Esophagus muscularis mucosa (tissue), 4 donors: ENCODE measurements at regions of chr15 and their contacts with region 1.

Region 1: DNA sequence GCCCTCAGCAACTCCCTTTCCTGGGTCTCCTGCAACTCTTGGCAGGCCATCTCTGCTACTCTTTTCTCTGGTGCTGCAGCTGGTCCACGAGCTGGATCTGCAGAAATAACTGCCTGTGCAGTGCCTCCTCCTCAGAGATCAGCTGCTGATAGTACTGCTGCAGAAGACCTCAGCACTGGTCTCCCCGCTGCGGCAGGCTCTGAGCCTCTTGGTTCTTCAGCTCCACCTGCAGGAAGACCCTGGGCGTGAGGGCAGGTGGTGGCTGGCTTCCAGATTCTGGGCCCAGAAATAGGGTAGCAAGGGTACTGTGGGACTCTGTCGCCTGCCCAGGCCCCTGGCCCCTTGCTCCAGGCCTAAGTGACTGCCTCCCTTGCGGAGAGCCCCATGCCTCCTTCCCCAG is 79.7 kb upstream of the C2CD4B start:
- DNase-seq: no peak
- H3K4me3 ChIP-seq: no peak overlapping the region
- H3K27ac ChIP-seq: no peak overlapping the region
- H3K4me1 ChIP-seq: no peaks in the 10 kb centered on the region
- H3K27me3 ChIP-seq: no peaks in the 10 kb centered on the region
- CTCF ChIP-seq: no peak
- EP300 ChIP-seq: no peak
- POLR2A ChIP-seq: no peak

Region 2: DNA sequence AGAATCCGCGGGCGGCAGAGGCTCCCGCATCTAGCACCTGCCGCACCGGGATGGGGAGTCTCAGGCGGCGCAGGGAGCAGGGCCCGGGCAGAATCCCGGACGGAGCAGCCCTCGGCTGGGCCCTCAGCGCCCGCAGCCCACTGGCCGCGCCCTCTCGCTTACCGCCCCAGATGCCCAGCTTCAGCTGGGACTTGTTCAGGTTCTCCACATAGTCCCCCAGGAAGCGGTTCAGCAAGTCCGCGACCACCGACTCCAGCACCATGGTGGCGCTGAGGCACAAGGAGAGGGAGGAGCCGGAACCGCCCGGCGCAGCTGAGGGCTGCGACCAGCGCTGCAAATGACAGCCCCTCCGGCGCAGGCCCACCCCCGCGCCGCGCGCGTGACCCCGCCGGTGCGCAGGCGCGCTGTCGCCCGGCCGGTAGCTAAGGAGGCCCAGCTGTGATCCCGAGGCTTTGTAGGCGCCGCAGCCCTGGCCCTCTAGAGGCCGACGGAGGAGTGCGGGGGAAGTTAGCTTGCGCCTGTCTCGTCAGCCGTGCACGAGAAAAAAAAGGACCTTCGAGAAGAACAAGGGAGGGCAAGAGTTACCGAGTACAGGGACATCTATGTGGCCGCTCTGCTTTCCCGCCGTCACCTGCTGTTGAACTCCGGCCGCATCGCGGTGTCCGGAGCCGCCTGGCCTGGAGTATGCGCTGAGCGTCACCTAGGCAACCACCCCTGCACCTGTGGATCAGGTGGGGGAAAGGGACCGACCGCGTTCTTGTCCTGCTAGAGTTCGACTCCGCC is 184.5 kb before region 1 on chr15 and contains the start of gene VPS13C:
- intact Hi-C with region 1: no loop called
- DNase-seq: peak; percentile 96
- H3K4me3 ChIP-seq: peak within 1 kb of the TSS; percentile 88 to 96 (median 92)
- H3K27ac ChIP-seq: peak within 1 kb of the TSS; percentile 92 to 95 (median 94)
- H3K4me1 ChIP-seq: peaks cover 11 to 23% (median 22%) of the 10 kb centered on the region in 4 donors
- H3K27me3 ChIP-seq: peaks cover 0 to 8% (median 0%) of the 10 kb centered on the region in 4 donors
- CTCF ChIP-seq: peak; percentile 72 to 89 (median 81)
- EP300 ChIP-seq: no peak
- POLR2A ChIP-seq: peak; percentile 45
- total RNA-seq, gene VPS13C: 58.5 to 86.0 (median 59.4) TPM

Region 3: DNA sequence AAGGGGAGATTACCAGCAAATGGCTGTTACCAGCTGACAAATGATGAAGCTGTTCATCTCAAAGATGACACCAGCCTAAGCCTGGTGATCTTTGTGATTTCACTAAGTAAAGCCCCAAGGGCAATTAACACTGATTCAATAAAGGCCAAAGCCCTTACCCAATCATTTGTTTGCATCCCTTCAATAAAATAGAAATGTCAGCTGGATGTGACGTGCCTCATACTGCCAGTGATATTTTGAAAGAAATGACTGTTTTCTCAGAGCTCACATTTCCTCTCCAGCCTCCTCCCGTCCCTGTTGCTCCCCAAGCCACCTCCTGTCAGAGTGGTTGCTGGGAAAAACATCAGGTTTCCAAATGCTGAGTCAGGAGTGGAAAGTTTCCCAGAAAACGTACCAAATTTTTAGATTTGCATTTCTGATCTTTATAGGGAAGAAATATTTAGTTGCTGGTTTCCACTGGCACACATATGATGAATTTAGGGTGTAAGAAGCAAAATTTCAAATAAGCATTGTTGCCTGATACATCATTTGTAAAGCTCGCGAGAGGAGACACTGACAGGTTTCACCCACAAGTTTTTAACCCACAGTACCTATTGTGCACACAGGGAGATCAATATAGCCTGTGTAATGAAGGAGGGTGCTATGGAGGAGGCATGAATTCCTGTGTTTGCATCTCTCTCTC is 156.9 kb before region 1 on chr15:
- intact Hi-C with region 1: no loop called
- DNase-seq: no peak
- H3K4me3 ChIP-seq: no peak overlapping the region
- H3K27ac ChIP-seq: no peak overlapping the region
- H3K4me1 ChIP-seq: peaks cover 0 to 13% (median 6%) of the 10 kb centered on the region in 4 donors
- H3K27me3 ChIP-seq: no peaks in the 10 kb centered on the region
- CTCF ChIP-seq: no peak
- EP300 ChIP-seq: no peak
- POLR2A ChIP-seq: no peak

Region 4: GRCh38 chr15:62228604-62229003 is 16.2 kb before region 1 on chr15:
- intact Hi-C with region 1: loop called (anchors 1 kb)
- DNase-seq: no peak
- H3K4me3 ChIP-seq: no peak overlapping the region
- H3K27ac ChIP-seq: no peak overlapping the region
- H3K4me1 ChIP-seq: no peaks in the 10 kb centered on the region
- H3K27me3 ChIP-seq: no peaks in the 10 kb centered on the region
- CTCF ChIP-seq: no peak
- EP300 ChIP-seq: no peak
- POLR2A ChIP-seq: no peak